ENCODE measurements at regions of chr18 and their contacts with region 1.

Region 1: GRCh38 chr18:77124452-77124922 is 8.1 kb downstream of the MBP start:
- DNase-seq: peak in 6 of 9 experiments; percentile 54 to 85 (median 70)
- ATAC-seq: peak; percentile 56
- H3K4me3 ChIP-seq: peak overlapping the region; percentile 33 to 39
- H3K4me3 Mint-ChIP-seq: peak overlapping the region; percentile 72
- H3K27ac ChIP-seq: peak overlapping the region; percentile 24 to 80
- H3K27ac Mint-ChIP-seq: peak overlapping the region; percentile 89
- H3K4me1 ChIP-seq: peaks cover 85% of the 10 kb centered on the region
- H3K4me1 Mint-ChIP-seq: peaks cover 92% of the 10 kb centered on the region
- H3K27me3 ChIP-seq: no peaks in the 10 kb centered on the region
- H3K27me3 Mint-ChIP-seq: no peaks in the 10 kb centered on the region
- CTCF ChIP-seq: no peak

Region 2: DNA sequence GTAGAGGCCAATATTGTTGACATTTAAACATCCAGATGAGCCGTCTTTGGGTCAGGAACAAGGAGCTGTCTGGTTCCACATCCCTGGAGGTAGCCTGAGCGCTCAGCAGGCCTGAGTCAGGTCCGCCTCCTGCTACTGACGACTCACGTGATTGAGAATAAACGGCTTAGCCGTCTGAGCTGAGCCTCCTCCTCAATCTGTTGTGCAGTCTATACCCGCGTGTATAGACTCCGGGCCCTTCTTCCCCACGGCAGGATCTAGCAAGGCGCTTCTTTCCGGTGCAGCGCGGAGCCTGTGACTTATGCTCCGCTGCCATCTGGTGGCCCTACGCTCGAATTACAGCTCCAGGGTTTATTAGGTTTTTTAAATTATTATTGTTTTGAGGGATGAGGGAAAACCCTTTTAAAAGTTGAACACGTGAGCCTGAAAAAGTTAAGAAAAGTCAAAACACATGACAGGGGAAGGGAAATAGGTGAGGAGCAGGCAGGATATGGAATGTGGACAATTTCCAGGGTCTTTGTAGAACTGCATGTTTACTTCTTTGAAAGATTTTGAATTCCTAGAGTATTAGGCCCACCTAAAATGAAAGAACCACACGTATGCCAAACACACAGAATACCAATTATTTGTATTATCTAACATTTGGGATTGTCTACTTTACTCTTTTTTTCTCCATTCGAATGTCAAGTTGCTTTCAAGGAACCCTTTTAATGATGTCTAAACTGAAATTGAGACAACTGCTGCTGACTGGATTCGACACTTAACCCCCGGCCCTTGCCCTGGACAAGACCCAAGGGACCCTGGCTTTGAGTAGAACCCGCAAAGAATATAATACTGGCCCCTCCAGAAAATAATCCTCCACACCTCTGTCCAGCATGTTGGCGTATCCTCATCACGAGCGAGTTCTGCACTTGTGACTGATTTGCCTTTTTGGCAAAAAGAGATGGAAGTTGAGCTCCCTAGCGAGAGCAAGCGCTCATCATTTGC is 414.5 kb before region 1 on chr18:
- CTCF ChIA-PET with region 1: no interaction called
- POLR2A ChIA-PET with region 1: no interaction called
- intact Hi-C with region 1: no loop called
- DNase-seq: peak; percentile 30 to 76 (median 66)
- ATAC-seq: peak; percentile 94
- H3K4me3 ChIP-seq: no peak overlapping the region
- H3K4me3 Mint-ChIP-seq: no peak overlapping the region
- H3K27ac ChIP-seq: no peak overlapping the region
- H3K27ac Mint-ChIP-seq: no peak overlapping the region
- H3K4me1 ChIP-seq: peaks cover 4% of the 10 kb centered on the region
- H3K4me1 Mint-ChIP-seq: peaks cover 4% of the 10 kb centered on the region
- H3K27me3 ChIP-seq: no peaks in the 10 kb centered on the region
- H3K27me3 Mint-ChIP-seq: peaks cover 6% of the 10 kb centered on the region
- CTCF ChIP-seq: peak; percentile 99

Region 3: DNA sequence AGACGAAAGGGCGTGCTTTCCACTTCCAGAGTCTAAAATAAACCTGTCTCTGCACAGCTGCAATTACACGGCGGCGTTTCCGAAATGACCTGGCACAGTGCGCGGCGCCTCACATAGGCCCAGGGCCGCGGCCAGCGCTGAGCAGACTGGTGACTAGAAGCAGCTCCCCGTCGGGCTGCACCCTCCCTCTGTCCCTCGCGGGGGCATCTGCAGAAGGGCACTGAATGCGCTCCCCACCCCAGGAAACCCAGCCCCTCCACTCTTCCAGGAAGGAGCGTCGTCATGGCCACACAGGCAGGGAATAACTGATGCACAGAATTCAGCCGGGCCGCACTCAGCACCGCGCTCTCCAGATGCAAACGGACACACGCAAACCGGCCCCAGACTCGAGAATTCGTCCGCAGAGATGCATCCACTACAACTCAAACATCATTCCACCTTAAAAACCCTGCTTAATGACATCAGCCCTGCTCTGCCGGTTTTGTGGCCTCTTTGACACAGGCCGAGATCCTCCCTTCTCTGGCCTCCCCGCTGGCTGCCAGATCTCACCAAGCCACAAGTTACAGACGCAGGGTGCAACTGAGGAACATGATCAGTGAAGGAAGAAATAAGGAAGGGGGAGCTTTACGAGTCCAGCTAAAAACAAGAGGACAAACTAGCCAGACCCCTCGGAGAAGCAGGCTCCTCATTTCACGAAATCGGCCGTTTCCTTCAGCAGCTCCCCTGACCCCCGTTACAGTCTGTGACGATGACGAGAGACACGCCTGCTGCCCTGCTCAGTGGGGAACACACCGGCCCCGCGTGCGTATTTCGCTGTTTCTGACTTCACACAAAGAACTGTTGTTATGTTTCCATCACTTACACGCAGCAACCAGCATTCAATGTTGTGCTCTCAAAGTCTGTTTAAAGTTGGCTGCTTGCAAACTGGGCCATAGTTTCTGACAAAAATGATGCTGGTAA is 32.1 kb before region 1 on chr18:
- CTCF ChIA-PET with region 1: no interaction called
- POLR2A ChIA-PET with region 1: no interaction called
- intact Hi-C with region 1: no loop called
- DNase-seq: peak in 2 of 9 experiments; percentile 36 to 55
- ATAC-seq: peak; percentile 48
- H3K4me3 ChIP-seq: no peak overlapping the region
- H3K4me3 Mint-ChIP-seq: peak overlapping the region; percentile 6
- H3K27ac ChIP-seq: peak overlapping the region in 1 of 2 experiments; percentile 64
- H3K27ac Mint-ChIP-seq: peak overlapping the region; percentile 29
- H3K4me1 ChIP-seq: peaks cover 57% of the 10 kb centered on the region
- H3K4me1 Mint-ChIP-seq: peaks cover 74% of the 10 kb centered on the region
- H3K27me3 ChIP-seq: no peaks in the 10 kb centered on the region
- H3K27me3 Mint-ChIP-seq: no peaks in the 10 kb centered on the region
- CTCF ChIP-seq: no peak

Region 4: GRCh38 chr18:77108001-77108692 is 16.3 kb before region 1 on chr18:
- CTCF ChIA-PET with region 1: interaction called, 22 read pairs
- POLR2A ChIA-PET with region 1: interaction called, 12 read pairs
- intact Hi-C with region 1: loop called (anchors 2 kb)
- DNase-seq: peak in 4 of 9 experiments; percentile 34 to 68 (median 54)
- ATAC-seq: peak; percentile 18
- H3K4me3 ChIP-seq: no peak overlapping the region
- H3K4me3 Mint-ChIP-seq: peak overlapping the region; percentile 55
- H3K27ac ChIP-seq: peak overlapping the region; percentile 31 to 87
- H3K27ac Mint-ChIP-seq: peak overlapping the region; percentile 94
- H3K4me1 ChIP-seq: peaks cover 82% of the 10 kb centered on the region
- H3K4me1 Mint-ChIP-seq: peaks cover 92% of the 10 kb centered on the region
- H3K27me3 ChIP-seq: no peaks in the 10 kb centered on the region
- H3K27me3 Mint-ChIP-seq: no peaks in the 10 kb centered on the region
- CTCF ChIP-seq: no peak

Region 5: GRCh38 chr18:77147418-77147852 is 22.9 kb after region 1 on chr18:
- CTCF ChIA-PET with region 1: interaction called, 8 read pairs
- POLR2A ChIA-PET with region 1: no interaction called
- intact Hi-C with region 1: loop called in 1 of 2 experiments (anchors 2 kb)
- DNase-seq: peak in 4 of 9 experiments; percentile 36 to 60 (median 40)
- ATAC-seq: peak; percentile 88
- H3K4me3 ChIP-seq: no peak overlapping the region
- H3K4me3 Mint-ChIP-seq: peak overlapping the region; percentile 6
- H3K27ac ChIP-seq: peak overlapping the region in 1 of 2 experiments; percentile 52
- H3K27ac Mint-ChIP-seq: peak overlapping the region; percentile 85
- H3K4me1 ChIP-seq: peaks cover 22% of the 10 kb centered on the region
- H3K4me1 Mint-ChIP-seq: peaks cover 27% of the 10 kb centered on the region
- H3K27me3 ChIP-seq: no peaks in the 10 kb centered on the region
- H3K27me3 Mint-ChIP-seq: no peaks in the 10 kb centered on the region
- CTCF ChIP-seq: no peak

Measured in CD8-positive, alpha-beta T cell (primary cell).